Activated CD4-positive, alpha-beta T cell treated with anti-CD3 and anti-CD28 coated beads for 36 hours (primary cell): ENCODE measurements at regions of chr15 and their contacts with region 1.

Region 1: DNA sequence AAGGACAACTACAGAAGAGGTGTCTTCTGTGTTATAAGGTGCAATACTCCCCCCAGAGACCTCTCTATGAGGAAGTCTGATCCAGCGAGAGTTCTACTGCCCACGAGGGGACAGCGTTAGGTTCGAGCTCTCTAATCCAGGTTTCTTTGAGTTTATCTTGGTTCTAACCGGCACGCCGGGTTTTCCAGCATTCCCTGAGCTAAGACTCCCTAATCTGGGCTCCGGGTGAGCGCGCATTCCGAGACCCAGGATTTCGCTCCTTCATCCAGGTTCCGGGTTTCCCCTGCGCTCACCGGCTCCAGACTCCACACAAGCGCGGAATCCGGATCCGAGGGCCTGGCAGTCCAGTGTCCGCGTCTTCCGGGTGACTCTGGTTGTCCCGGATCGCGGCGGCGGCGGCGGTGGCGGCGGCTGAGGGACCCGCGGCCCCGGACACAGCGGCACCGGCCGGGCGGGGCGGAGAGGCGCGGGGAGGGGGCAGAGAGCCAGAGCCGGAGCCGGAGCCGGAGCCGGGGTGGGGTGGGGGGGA is at the start of gene ZNF609:
- DNase-seq: peak; percentile 94
- ATAC-seq: peak; percentile 54
- H3K4me3 Mint-ChIP-seq: peak within 1 kb of the TSS; percentile 83
- H3K27ac Mint-ChIP-seq: peak within 1 kb of the TSS; percentile 92
- H3K4me1 Mint-ChIP-seq: peaks cover 80% of the 10 kb centered on the region
- H3K27me3 Mint-ChIP-seq: no peaks in the 10 kb centered on the region
- total RNA-seq, gene ZNF609: 39.8 to 44.5 TPM

Region 2: GRCh38 chr15:64381000-64381752 is 79.1 kb before region 1 on chr15 and contains the start of gene PCLAF:
- CTCF ChIA-PET with region 1: no interaction called
- POLR2A ChIA-PET with region 1: interaction called, 3 read pairs
- intact Hi-C with region 1: loop called in 1 of 2 experiments (anchors 5 kb)
- DNase-seq: peak; percentile 97
- ATAC-seq: peak; percentile 99
- H3K4me3 Mint-ChIP-seq: peak within 1 kb of the TSS; percentile 97
- H3K27ac Mint-ChIP-seq: peak within 1 kb of the TSS; percentile 84
- H3K4me1 Mint-ChIP-seq: peaks cover 18% of the 10 kb centered on the region
- H3K27me3 Mint-ChIP-seq: no peaks in the 10 kb centered on the region
- total RNA-seq, gene PCLAF: 41.4 to 97.6 TPM

Region 3: GRCh38 chr15:64430000-64430735 is 30.1 kb before region 1 on chr15:
- CTCF ChIA-PET with region 1: no interaction called
- POLR2A ChIA-PET with region 1: interaction called, 6 read pairs
- intact Hi-C with region 1: loop called (anchors 2 kb)
- DNase-seq: peak; percentile 35
- ATAC-seq: peak; percentile 61
- H3K4me3 Mint-ChIP-seq: no peak overlapping the region
- H3K27ac Mint-ChIP-seq: peak overlapping the region; percentile 92
- H3K4me1 Mint-ChIP-seq: peaks cover 44% of the 10 kb centered on the region
- H3K27me3 Mint-ChIP-seq: no peaks in the 10 kb centered on the region

Region 4: GRCh38 chr15:64513823-64514222 is 53.6 kb after region 1 on chr15:
- CTCF ChIA-PET with region 1: no interaction called
- POLR2A ChIA-PET with region 1: interaction called, 4 read pairs
- intact Hi-C with region 1: loop called in 1 of 2 experiments (anchors 5 kb)
- DNase-seq: no peak
- ATAC-seq: no peak
- H3K4me3 Mint-ChIP-seq: no peak overlapping the region
- H3K27ac Mint-ChIP-seq: peak overlapping the region; percentile 44
- H3K4me1 Mint-ChIP-seq: peaks cover 71% of the 10 kb centered on the region
- H3K27me3 Mint-ChIP-seq: no peaks in the 10 kb centered on the region

Region 5: DNA sequence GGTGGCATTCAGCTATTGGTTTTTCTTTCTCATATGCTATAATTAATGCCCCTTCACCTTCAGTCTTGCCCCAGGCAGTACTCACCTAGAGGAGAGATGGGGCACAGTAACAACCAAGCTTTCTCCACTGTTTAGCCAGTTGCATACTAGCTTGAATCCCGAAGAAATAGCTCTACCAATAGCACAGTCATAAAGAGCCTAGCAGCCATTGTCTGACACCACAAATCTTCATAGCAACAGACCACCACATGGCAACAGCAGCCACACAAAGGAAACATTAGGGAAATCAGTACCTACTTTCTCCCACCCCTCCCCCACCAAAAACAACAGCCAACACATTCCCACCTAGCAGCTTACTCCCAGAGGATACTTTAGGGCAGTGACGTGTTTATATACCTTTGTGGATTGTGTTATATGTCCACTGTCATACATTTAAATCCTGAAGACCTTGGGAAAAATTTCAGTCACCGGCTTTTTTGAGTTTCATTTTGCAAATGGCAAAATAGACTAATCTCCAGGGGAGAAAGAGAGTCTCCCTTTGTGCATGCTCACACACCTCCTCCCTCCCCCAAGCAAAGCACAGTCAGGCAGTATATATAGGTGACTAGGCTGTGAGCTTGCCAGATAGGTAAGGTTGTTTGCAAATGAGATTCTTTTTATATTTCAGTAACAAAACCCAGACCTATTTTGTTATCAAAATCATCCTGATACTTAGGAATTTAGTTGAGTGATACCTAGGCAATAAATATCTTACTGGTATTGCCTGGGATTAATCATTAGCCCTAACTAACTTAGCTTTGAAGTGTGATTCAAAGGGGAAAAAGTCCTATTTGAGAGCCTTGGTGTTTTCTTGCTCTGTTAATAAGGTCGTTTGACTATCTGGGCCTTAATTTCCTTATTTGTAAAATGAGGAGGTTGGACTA is 174.6 kb after region 1 on chr15:
- CTCF ChIA-PET with region 1: no interaction called
- POLR2A ChIA-PET with region 1: no interaction called
- intact Hi-C with region 1: loop called in 1 of 2 experiments (anchors 1 kb)
- DNase-seq: peak; percentile 56
- ATAC-seq: peak; percentile 65
- H3K4me3 Mint-ChIP-seq: peak overlapping the region; percentile 2
- H3K27ac Mint-ChIP-seq: peak overlapping the region; percentile 74
- H3K4me1 Mint-ChIP-seq: peaks cover 61% of the 10 kb centered on the region
- H3K27me3 Mint-ChIP-seq: no peaks in the 10 kb centered on the region

Region 6: GRCh38 chr15:64731012-64731806 is 270.9 kb after region 1 on chr15:
- CTCF ChIA-PET with region 1: no interaction called
- POLR2A ChIA-PET with region 1: no interaction called
- intact Hi-C with region 1: no loop called
- DNase-seq: peak; percentile 93
- ATAC-seq: peak; percentile 84
- H3K4me3 Mint-ChIP-seq: no peak overlapping the region
- H3K27ac Mint-ChIP-seq: no peak overlapping the region
- H3K4me1 Mint-ChIP-seq: peaks cover 4% of the 10 kb centered on the region
- H3K27me3 Mint-ChIP-seq: peaks cover 2% of the 10 kb centered on the region

Region 7: DNA sequence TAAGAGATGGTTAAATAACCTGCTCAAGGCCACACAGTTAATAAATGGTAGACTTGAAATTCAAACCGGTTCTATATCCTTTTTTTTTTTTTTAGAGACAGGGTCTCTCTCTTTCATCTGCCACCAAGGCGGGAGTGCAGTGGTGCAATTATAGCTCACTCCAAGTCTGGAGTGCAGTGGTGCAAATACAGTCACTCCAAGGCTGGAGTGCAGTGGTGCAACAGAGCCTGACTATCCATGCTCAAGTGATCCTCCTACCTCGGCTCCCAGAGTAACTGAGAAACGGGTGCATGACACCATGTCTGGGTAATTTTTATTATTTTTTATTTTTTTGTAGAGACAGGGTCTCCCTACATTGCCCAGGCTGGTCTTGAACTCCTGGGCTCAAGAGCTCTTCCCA is 1033.8 kb after region 1 on chr15:
- CTCF ChIA-PET with region 1: no interaction called
- POLR2A ChIA-PET with region 1: no interaction called
- intact Hi-C with region 1: no loop called
- DNase-seq: no peak
- ATAC-seq: no peak
- H3K4me3 Mint-ChIP-seq: no peak overlapping the region
- H3K27ac Mint-ChIP-seq: no peak overlapping the region
- H3K4me1 Mint-ChIP-seq: no peaks in the 10 kb centered on the region
- H3K27me3 Mint-ChIP-seq: no peaks in the 10 kb centered on the region